Mammary epithelial cell (primary cell): ENCODE measurements at regions of chr20 and their contacts with region 1.

Region 1: GRCh38 chr20:50895111-50895830 is 36.0 kb downstream of the ADNP start:
- DNase-seq: no peak
- H3K4me3 ChIP-seq: no peak overlapping the region
- H3K27ac ChIP-seq: no peak overlapping the region
- H3K4me1 ChIP-seq: no peaks in the 10 kb centered on the region
- H3K27me3 ChIP-seq: no peaks in the 10 kb centered on the region
- CTCF ChIP-seq: no peak

Region 2: DNA sequence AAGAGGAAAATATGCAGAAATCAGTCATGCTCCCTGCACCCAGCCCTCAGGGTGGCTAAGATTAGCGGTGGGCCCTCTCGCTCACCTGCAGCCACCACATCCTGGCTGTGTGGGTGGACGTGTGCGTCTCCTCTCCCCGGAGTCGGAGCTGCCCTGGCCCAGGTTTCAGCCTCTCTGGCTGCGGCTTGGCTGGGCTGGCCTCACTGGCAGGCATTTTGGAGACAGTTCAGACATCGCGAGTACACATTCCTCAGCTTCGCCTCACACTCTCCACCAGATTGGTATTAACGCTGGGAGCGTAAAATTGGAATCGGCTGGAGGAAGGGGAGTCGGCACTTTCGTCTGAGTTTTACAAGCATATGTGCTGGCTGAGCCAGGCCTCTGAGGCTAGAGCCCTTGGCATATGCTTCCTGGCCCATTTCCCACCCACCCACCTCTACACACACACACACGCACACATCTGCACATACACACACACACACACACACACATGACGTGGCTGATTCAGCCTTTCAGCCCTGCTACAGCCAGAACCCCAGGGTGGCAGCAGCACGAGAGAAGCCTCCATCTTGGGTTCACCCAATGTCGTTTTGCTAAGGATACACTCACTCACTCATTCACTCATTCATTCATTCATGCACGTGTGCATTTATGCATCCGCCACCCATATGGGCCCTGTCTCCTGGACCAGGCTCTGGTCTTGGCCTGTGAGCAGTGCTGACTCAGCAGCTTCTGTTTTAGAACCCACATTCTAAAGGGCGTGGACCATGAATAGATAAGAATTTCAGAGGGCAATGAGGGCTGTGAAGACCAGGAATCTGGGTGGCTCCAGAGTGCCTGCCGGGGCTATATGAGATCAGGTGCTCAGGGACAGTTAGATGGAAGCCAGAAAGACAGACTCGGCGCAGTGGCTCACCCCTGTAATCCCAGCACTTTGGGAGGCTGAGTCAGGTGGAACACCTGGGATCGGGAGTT is 57.5 kb before region 1 on chr20:
- CTCF ChIA-PET with region 1: no interaction called
- dilution Hi-C with region 1: loop called (anchors 5 kb)
- in situ Hi-C with region 1: no loop called
- intact Hi-C with region 1: no loop called
- DNase-seq: peak; percentile 89
- H3K4me3 ChIP-seq: no peak overlapping the region
- H3K27ac ChIP-seq: peak overlapping the region; percentile 70
- H3K4me1 ChIP-seq: peaks cover 34% of the 10 kb centered on the region
- H3K27me3 ChIP-seq: no peaks in the 10 kb centered on the region
- CTCF ChIP-seq: no peak